Head of caudate nucleus (tissue), 42 donors: ENCODE measurements at regions of chr12 and their contacts with region 1.

Region 1: DNA sequence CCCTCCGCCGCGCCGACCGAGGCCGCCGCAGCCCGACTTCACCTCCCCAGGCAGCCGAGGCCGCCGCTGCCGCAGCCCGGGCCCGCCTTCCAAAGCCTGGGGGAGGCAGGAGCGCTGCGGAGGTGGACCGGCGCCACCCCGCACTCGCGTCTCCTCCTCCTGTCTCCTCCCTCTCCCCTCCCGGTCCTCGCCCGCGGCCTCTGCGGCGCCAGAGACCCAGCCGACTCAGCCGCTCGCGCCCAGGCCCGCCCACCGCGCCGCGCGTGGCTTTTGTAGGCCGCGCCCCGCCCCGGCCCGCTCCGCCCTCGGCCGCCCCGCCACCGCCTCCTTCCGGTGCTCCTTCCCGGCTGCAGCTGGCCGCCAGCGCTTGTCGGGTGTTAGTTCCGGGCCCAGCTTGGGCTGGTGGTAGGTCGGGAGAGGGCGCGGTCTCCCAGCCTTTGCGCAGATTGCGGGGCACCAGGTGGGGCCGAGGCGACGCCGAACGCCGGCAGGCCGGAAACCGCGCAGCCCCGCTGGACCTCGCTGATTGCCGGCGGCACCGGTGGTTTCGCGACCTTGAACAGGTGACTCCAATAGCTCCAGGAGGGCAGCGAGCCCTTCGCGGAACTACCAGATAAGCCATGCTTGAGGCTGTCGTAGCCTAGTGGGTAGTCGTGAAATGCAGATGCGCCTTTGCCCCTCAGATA is at the start of gene CAPRIN2:
- DNase-seq: peak; percentile 77 to 97 (median 94)

Region 2: DNA sequence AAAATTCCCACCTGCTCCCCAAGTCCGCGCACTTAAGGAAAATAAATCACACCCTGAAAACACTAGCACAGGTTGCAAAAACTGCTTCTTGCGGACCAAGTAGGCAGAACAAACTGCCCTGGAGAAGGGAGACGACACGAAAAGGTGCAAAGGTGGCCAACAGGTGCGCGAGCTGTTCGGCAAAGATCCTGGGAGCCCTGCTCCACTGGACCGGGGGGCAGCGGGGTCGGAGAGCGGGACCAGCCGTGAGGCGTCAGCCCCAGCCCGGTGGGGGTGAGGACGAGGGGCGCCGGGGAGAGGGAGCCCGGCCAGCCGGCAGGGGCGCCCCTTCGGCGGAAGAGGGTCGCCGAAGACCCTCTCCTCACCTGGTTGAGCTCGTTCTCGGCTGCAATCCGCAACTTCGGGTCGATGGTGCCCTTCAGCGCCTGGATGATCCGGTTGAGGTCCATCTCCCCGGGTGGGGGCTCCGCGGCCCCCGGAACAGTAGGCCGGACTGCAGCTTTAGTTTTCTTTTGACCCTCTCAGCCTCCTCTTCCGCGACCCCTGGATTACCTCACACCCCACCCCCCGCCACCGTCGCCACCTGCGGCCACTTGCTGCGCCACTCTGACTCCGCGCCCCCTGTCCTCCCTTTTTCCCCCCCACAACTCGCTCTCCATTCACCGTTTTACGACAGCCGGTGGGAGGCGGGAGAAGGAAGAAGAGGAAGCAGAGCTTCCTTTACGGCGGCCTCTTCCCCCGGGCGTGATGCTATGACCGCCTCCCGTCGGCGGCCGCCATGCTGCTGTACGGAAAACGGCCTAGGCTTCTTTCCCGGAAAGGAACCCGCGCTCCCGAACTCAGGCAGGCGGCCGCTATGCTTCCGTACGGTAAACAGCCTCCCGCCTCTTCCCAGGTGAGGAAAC is 59.4 kb before region 1 on chr12 and contains the start of gene IPO8:
- intact Hi-C with region 1: loop called (anchors 2 kb)
- DNase-seq: peak; percentile 84 to 97 (median 94)

Region 3: DNA sequence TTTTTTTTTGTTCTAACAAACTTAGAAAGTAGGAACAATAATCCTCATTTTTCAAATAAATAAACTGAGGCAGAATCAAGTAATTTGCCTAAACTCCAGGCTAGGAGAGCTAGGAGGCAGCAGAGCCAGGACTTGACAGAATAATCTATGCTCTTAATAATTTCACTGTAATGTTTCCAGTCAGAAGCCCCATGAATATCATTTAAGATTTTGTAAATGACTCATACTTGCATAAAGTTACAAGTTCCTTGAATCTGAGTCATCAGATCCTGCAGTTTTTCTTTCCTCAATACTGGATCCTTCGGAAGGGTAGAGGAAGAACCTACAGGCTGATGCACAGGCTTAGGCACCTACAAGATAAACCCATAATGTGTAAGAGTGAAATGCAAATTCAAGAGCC is 29.1 kb before region 1 on chr12:
- intact Hi-C with region 1: no loop called
- DNase-seq: peak in 4 of 42 donors; percentile 6 to 44 (median 10)

Region 4: GRCh38 chr12:30908722-30909348 is 154.0 kb after region 1 on chr12:
- intact Hi-C with region 1: no loop called
- DNase-seq: no peak